ENCODE measurements at regions of chr3 and their contacts with region 1.

Region 1: DNA sequence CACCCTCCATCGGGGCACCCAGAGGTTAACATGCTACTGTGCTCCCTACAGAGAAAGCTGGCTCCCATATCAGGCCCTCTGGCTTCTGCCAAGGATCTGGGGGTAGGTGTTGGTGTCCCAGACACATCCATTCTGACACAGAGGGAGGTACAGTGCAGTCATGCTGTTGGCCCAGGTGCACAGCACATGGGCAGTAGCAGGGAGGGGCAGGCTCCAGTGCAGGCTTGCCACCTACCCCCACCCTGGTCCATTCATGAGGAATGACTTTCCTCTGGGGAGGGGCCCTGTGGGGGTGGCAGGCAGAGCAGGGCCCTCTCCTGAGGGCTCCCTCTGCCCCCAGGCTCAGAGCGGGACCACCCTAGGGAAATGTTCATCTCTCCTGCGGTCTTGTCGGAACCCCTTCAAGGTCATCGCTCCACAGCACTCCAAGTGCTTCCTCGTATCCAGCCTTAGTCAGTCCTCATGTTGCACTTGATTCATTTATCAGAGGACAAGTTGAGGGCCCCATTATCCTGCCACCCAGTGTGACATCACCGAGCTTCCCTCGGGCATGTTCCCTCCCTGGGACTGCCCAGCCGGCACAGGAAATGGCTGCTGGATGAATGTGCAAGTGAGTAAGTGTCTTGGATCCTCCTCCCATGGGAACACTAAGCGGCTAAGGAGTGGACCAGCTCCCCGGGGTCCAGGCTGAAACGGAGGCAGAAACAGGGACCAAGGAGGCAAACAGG is 10.0 kb downstream of the DUSP7 start:
- DNase-seq: peak; percentile 100
- H3K4me3 ChIP-seq: peak overlapping the region in 2 of 3 experiments; percentile 4 to 21
- H3K27ac ChIP-seq: peak overlapping the region; percentile 98
- H3K4me1 ChIP-seq: peaks cover 60% of the 10 kb centered on the region
- H3K27me3 ChIP-seq: no peaks in the 10 kb centered on the region
- CTCF ChIP-seq: no peak

Region 2: GRCh38 chr3:51967384-51968169 is 78.8 kb before region 1 on chr3 and contains the start of gene PCBP4:
- CTCF ChIA-PET with region 1: no interaction called
- dilution Hi-C with region 1: loop called (anchors 5 kb)
- in situ Hi-C with region 1: no loop called
- intact Hi-C with region 1: no loop called
- DNase-seq: no peak
- H3K4me3 ChIP-seq: peak within 1 kb of the TSS; percentile 44 to 83 (median 75)
- H3K27ac ChIP-seq: peak within 1 kb of the TSS; percentile 21
- H3K4me1 ChIP-seq: peaks cover 19% of the 10 kb centered on the region
- H3K27me3 ChIP-seq: no peaks in the 10 kb centered on the region
- CTCF ChIP-seq: no peak
- total RNA-seq, gene PCBP4: 51.0 to 61.1 TPM

Region 3: DNA sequence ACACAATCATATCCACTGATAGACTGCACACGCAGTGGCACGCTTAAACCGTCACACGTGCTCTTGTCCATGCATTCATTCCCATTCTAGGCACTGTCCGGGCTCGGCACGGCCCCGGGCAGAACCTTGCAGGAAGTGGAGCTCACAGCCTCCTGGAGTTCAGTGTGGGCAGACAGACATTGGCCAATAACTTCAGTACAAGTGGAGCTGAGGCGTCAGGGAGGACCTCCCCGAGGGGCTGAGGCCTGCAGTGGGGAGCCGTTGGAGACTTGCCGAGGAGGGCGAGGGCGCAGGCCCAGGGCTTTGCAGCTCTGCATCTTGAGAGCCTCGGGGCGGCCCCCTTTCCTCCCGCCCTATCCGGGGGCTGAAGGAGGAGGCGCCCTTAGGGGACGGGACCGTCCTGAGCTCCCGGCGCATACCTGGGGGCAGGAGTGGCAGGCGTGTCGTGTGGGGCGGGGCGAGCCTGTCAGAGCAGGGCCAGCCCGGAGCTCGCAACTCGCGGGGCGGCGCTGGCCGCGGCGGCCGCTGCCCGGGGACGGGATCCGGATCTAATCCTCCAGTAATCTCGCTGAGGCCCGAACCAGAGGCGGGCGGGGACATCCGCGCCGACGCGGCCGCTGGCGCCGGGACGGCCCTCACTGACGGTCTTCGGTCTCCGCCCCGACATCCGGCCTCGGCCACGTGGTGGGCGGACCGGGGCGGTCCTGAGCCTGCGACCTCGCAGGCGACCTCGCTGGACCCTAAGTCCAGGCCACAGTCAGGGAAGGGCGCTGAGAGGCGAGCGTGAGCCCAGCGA is 63.4 kb before region 1 on chr3 and contains the start of gene ACY1:
- CTCF ChIA-PET with region 1: no interaction called
- dilution Hi-C with region 1: no loop called
- in situ Hi-C with region 1: no loop called
- intact Hi-C with region 1: no loop called
- DNase-seq: peak; percentile 92
- H3K4me3 ChIP-seq: peak within 1 kb of the TSS; percentile 47 to 84 (median 52)
- H3K27ac ChIP-seq: peak within 1 kb of the TSS; percentile 62
- H3K4me1 ChIP-seq: peaks cover 27% of the 10 kb centered on the region
- H3K27me3 ChIP-seq: no peaks in the 10 kb centered on the region
- CTCF ChIP-seq: no peak
- total RNA-seq, gene ACY1: 90.5 to 107 TPM

Region 4: DNA sequence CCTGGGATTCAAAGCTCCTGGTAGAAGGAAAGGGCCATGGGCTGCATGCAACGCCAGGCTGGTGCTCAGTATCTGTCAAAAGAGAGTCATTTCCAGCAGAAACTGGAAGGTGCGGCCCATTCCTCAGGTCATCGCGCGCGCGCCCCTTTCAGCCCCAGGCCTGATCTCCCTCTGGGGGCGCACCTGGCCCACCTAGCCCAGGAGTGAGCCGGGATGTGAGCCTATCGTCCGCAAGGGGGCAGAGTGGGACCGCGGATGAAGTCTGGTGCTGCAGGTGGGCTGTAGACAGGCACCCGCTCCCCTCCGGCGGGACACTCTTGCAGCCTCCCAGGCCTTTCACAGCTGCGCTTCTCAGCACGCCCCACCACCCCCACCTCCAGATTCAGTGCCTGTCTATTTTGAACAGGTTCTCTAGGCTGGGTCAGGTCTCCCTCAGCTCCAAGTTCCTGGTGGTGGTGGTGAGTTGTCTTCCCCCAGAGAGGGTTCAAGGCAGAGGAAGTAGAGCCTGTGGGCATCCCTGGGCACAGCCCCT is 44.8 kb before region 1 on chr3:
- CTCF ChIA-PET with region 1: no interaction called
- dilution Hi-C with region 1: no loop called
- in situ Hi-C with region 1: loop called (anchors 5 to 10 kb)
- intact Hi-C with region 1: no loop called
- DNase-seq: peak; percentile 49
- H3K4me3 ChIP-seq: no peak overlapping the region
- H3K27ac ChIP-seq: no peak overlapping the region
- H3K4me1 ChIP-seq: peaks cover 35% of the 10 kb centered on the region
- H3K27me3 ChIP-seq: no peaks in the 10 kb centered on the region
- CTCF ChIP-seq: peak; percentile 75 to 90

Region 5: DNA sequence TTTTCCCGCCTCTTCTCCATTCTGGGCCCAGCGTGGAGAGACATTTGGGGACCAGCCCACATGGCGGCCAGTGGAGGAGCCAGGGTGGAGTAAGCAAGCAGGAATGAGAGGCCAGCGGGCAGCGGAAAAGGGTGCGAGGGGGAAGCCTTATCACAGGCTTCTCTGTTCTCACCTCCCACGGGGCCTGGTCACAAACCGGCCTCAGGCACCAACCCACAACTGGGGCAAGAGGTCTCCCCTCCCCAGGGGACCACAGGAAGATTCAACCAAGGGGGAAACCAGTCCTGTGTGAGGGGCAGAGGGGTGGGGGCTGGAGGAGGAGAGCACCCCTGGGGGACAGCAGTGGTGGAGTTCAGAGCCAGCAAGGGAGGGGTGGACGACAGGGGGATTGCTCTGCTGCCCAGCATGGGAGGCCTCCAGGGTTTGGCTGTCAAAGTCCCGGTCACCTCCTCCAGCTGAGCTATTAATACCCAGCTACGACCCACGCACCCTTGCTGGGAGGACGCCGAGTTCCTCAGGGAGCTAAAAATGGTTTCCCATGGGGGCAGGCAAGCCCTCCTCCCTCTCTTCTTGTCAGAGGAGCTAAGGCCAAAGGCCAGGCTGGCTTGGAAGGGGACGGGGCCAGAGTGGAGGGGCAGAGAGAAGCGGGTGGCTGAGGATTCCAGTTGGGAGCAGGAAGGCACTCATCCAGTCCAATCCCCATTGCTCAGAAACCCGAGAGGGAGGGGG is 26.8 kb before region 1 on chr3:
- CTCF ChIA-PET with region 1: no interaction called
- dilution Hi-C with region 1: no loop called
- in situ Hi-C with region 1: no loop called
- intact Hi-C with region 1: no loop called
- DNase-seq: no peak
- H3K4me3 ChIP-seq: no peak overlapping the region
- H3K27ac ChIP-seq: no peak overlapping the region
- H3K4me1 ChIP-seq: no peaks in the 10 kb centered on the region
- H3K27me3 ChIP-seq: no peaks in the 10 kb centered on the region
- CTCF ChIP-seq: no peak

Region 6: DNA sequence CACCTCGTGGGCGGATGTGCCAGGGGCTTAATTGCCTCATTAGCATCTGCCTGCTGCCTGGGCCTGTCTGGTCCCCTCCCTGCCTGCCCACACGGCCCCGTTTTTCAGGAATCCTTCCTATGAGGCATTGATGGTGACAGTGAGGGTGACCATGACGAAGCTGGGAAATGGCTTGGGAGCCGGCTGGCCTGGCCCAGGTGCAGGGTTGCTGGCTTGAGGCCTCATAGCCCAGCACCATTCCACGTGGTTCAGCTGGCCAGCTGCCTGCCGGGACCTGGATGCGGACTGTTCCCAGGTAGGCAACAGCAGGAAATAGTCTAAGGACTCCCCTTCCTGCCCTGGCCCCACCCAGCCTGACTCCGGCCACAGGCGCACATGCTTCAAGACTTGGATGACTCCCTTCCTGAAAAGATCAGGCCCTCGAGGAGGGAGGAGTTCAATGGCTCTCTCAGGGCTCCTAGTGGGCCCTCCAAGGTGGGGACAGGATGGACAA is 19.0 kb after region 1 on chr3:
- CTCF ChIA-PET with region 1: no interaction called
- dilution Hi-C with region 1: no loop called
- in situ Hi-C with region 1: no loop called
- intact Hi-C with region 1: loop called (anchors 1 kb)
- DNase-seq: peak; percentile 90
- H3K4me3 ChIP-seq: no peak overlapping the region
- H3K27ac ChIP-seq: peak overlapping the region; percentile 84
- H3K4me1 ChIP-seq: peaks cover 70% of the 10 kb centered on the region
- H3K27me3 ChIP-seq: no peaks in the 10 kb centered on the region
- CTCF ChIP-seq: no peak

Region 7: DNA sequence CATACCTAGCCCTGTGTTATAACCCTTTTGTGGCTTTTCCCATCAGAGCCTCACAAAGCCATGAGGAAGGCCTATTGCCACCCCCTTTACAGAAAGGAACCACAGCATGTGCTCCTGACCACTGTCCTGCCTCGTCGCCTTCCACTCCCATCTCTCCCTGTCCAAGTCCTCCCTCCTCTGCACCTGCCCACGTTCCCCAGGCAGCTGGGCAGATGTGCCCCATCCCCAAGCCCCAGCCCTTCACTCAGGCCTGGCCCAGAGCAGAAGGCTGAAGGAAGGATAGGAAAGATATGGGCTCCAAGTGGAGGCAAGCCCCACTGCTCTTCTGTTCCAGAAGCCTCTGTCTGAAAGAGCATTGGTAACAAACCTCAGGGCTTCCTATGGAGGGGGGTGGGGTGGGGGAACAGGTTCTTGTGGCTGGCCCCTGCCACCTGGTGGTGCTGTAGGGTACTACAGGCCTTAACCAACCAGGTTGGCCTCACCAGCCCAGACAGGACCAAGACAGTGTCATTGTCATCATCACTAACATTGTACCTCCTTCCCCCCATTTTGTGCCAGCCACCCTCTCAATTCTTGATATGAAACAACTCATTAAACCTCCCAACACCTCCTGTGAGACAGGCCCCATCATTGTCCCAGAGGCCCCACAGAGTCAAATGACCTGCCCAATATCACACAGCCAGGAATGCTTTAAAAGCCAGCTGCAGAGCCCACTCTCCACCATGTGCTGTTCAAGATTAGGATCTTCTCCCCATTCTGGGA is 97.9 kb after region 1 on chr3:
- CTCF ChIA-PET with region 1: no interaction called
- dilution Hi-C with region 1: loop called (anchors 5 kb)
- in situ Hi-C with region 1: no loop called
- intact Hi-C with region 1: no loop called
- DNase-seq: peak; percentile 53
- H3K4me3 ChIP-seq: no peak overlapping the region
- H3K27ac ChIP-seq: no peak overlapping the region
- H3K4me1 ChIP-seq: peaks cover 9% of the 10 kb centered on the region
- H3K27me3 ChIP-seq: no peaks in the 10 kb centered on the region
- CTCF ChIP-seq: peak; percentile 82 to 94

Region 8: DNA sequence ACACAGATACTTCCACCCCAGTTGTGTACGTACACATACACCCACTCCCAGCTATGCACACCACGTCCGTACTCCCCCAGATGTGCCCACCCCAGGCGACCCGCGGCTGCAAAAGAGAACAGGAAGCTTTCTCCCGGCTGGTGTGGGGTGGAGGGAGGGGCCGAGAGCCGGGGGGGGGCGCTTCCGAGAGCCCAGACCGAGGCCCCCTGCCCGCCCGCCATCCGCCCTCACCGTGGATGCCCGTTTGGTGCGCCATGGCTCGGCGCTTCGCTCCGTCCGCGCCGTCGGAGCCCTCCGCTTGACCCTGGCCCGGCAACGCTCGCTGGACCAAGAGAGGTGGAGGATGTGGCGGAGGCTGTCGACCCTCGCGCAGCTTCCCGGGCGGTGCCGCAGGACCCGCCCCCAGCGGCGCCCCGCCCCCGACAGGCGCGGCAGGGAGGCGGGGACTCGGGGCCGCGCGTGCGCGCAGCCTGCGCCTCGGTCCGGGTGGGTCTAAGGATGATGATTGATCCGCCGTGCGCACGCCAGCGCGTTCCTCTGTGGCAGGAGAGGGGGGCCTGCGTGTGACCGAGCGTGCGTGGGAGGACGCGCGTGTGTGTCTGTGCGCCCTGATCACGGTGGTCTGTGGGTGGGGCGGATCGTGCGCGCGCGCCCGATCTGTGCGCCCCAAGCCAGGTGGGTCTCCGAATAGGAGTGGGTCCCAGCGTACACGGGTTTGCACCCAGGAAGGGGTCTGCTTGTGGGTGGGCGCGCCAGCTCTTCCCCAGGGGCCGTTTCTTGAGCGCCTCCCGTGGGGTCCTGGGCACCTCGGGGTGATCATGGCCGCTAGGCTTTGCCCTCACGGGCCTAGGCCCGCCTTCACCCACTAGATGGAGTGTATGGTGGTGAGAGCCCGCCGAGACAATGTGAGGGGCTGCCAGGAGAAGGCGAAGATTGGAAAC is 192.7 kb after region 1 on chr3 and contains the start of gene TWF2:
- CTCF ChIA-PET with region 1: no interaction called
- dilution Hi-C with region 1: no loop called
- in situ Hi-C with region 1: no loop called
- intact Hi-C with region 1: loop called (anchors 5 kb)
- DNase-seq: peak; percentile 71
- H3K4me3 ChIP-seq: peak within 1 kb of the TSS; percentile 51 to 99 (median 95)
- H3K27ac ChIP-seq: peak within 1 kb of the TSS; percentile 66
- H3K4me1 ChIP-seq: peaks cover 41% of the 10 kb centered on the region
- H3K27me3 ChIP-seq: no peaks in the 10 kb centered on the region
- CTCF ChIP-seq: peak; percentile 24 to 48
- total RNA-seq, gene TWF2: 67.8 to 96.2 TPM

Measured in mammary epithelial cell (primary cell).